Activated T-helper 1 cell treated with anti-CD3 and anti-CD28 coated beads, Interleukin-12 subunit alpha, Interleukin-12 subunit beta, Interleukin-2, Interleukin-4 antibody, amounts not matched to agents 30 ng/mL and 10 ng/mL and 1 ng/mL, durations not matched to agents 14 hours and 24 hours and 36 hours (primary cell): ENCODE measurements at regions of chr15 and their contacts with region 1.

Region 1: GRCh38 chr15:43185157-43186017 is at the start of gene CCNDBP1:
- DNase-seq: peak; percentile 88
- H3K4me3 Mint-ChIP-seq: peak within 1 kb of the TSS; percentile 96
- H3K27ac Mint-ChIP-seq: peak within 1 kb of the TSS; percentile 92
- H3K4me1 Mint-ChIP-seq: peaks cover 31% of the 10 kb centered on the region
- H3K27me3 Mint-ChIP-seq: no peaks in the 10 kb centered on the region
- total RNA-seq, gene CCNDBP1: 57.7 and 60.2 TPM in 2 replicates

Region 2: GRCh38 chr15:42920519-42921227 is 264.7 kb before region 1 on chr15 and contains the start of gene TTBK2:
- intact Hi-C with region 1: loop called (anchors 1 kb)
- DNase-seq: peak; percentile 96
- H3K4me3 Mint-ChIP-seq: peak within 1 kb of the TSS; percentile 98
- H3K27ac Mint-ChIP-seq: peak within 1 kb of the TSS; percentile 94
- H3K4me1 Mint-ChIP-seq: peaks cover 37% of the 10 kb centered on the region
- H3K27me3 Mint-ChIP-seq: no peaks in the 10 kb centered on the region
- total RNA-seq, gene TTBK2: 11.4 and 13.4 TPM in 2 replicates

Region 3: DNA sequence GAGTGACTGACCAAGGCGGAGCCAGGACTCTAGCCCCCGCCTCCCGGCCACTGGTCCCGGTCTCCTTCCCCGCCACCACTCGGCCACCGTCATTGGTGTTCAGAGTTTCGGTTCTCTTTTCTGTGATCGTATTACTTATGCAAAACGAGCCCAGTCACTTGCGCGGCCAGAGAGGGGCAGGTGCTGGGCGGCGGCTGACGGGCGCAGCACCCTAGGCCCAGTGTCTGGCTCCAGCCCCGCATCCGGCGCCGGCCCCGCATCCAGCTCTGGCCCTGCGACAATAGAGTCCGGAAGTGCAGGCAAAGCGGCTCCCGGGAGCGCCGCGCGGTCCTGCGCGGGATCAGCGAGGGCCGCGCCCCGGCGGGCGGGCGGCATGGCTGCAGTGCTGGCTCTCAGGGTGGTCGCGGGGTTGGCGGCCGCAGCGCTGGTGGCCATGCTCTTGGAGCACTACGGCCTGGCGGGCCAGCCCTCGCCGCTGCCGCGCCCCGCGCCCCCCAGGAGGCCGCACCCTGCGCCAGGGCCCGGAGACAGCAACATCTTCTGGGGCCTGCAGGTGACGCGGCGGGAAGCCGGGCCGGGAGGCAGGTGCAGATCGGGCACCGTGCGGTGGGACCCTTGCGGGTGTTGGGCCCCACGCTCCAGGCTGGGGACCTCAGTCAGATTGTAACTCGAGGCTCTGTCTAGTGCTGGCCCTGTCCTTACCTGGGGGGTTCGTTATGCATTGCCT is 51.8 kb before region 1 on chr15 and contains the start of gene TMEM62:
- intact Hi-C with region 1: loop called (anchors 1 kb)
- DNase-seq: peak; percentile 67
- H3K4me3 Mint-ChIP-seq: peak within 1 kb of the TSS; percentile 96
- H3K27ac Mint-ChIP-seq: peak within 1 kb of the TSS; percentile 90
- H3K4me1 Mint-ChIP-seq: peaks cover 33% of the 10 kb centered on the region
- H3K27me3 Mint-ChIP-seq: peaks cover 9% of the 10 kb centered on the region
- total RNA-seq, gene TMEM62: 16.4 and 18.6 TPM in 2 replicates

Region 4: GRCh38 chr15:43225201-43225949 is 40.0 kb after region 1 on chr15:
- intact Hi-C with region 1: loop called (anchors 1 kb)
- DNase-seq: peak; percentile 36
- H3K4me3 Mint-ChIP-seq: no peak overlapping the region
- H3K27ac Mint-ChIP-seq: no peak overlapping the region
- H3K4me1 Mint-ChIP-seq: peaks cover 8% of the 10 kb centered on the region
- H3K27me3 Mint-ChIP-seq: peaks cover 16% of the 10 kb centered on the region

Region 5: GRCh38 chr15:43329960-43330779 is 144.8 kb after region 1 on chr15 and contains the start of gene LCMT2:
- intact Hi-C with region 1: loop called (anchors 2 kb)
- DNase-seq: peak; percentile 86
- H3K4me3 Mint-ChIP-seq: peak within 1 kb of the TSS; percentile 87
- H3K27ac Mint-ChIP-seq: peak within 1 kb of the TSS; percentile 94
- H3K4me1 Mint-ChIP-seq: peaks cover 40% of the 10 kb centered on the region
- H3K27me3 Mint-ChIP-seq: no peaks in the 10 kb centered on the region
- total RNA-seq, gene LCMT2: 15.4 and 15.7 TPM in 2 replicates

Region 6: GRCh38 chr15:43492673-43493601 is 307.6 kb after region 1 on chr15 and contains the start of gene TP53BP1:
- intact Hi-C with region 1: loop called (anchors 5 kb)
- DNase-seq: peak; percentile 93
- H3K4me3 Mint-ChIP-seq: peak within 1 kb of the TSS; percentile 93
- H3K27ac Mint-ChIP-seq: peak within 1 kb of the TSS; percentile 97
- H3K4me1 Mint-ChIP-seq: peaks cover 26% of the 10 kb centered on the region
- H3K27me3 Mint-ChIP-seq: no peaks in the 10 kb centered on the region
- total RNA-seq, gene TP53BP1: 44.1 and 46.1 TPM in 2 replicates